H1 (cell line): ENCODE measurements at regions of chr10 and their contacts with region 1.

Region 1: GRCh38 chr10:63268798-63269503 is 135.8 kb downstream of the NRBF2 start:
- DNase-seq: peak; percentile 51 to 68
- H3K4me3 ChIP-seq: peak overlapping the region; percentile 78 to 96 (median 82)
- H3K27ac ChIP-seq: peak overlapping the region; percentile 83
- H3K4me1 ChIP-seq: no peaks in the 10 kb centered on the region; a peak in 1 of 7 replicates
- H3K27me3 ChIP-seq: no peaks in the 10 kb centered on the region
- CTCF ChIP-seq: no peak
- EP300 ChIP-seq: no peak
- POLR2A ChIP-seq: peak; percentile 88 to 97
- RAD21 ChIP-seq: no peak; a peak in 1 of 4 replicates

Region 2: GRCh38 chr10:63256009-63256773 is 12.8 kb before region 1 on chr10:
- CTCF ChIA-PET with region 1: interaction called, 3 read pairs
- POLR2A ChIA-PET with region 1: interaction called, 37 read pairs
- DNase-seq: no peak
- H3K4me3 ChIP-seq: no peak overlapping the region
- H3K27ac ChIP-seq: no peak overlapping the region
- H3K4me1 ChIP-seq: peaks cover 0 to 6% (median under 1%) of the 10 kb centered on the region in 4 experiments; a peak in 2 of 7 replicates
- H3K27me3 ChIP-seq: no peaks in the 10 kb centered on the region
- CTCF ChIP-seq: no peak
- EP300 ChIP-seq: no peak
- POLR2A ChIP-seq: no peak
- RAD21 ChIP-seq: no peak

Region 3: DNA sequence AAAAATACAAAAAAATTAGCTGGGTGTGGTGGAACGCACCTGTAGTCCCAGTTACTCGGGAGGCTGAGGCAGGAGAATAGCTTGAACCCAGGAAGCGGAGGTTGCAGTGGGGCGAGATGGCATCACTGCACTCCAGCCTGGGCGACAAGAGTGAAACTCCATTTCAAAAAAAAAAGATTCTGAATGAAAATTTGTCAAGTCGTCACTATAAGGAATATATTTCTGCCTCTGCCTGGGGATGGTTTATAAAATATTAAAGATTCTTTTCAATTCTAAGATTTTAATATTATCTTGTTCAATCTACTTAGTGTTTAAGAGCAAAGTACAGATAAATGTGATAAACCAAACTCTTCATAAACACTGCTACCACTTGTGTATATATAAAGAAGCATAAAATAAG is 11.4 kb after region 1 on chr10:
- CTCF ChIA-PET with region 1: interaction called, 3 read pairs
- POLR2A ChIA-PET with region 1: interaction called, 36 read pairs
- DNase-seq: no peak
- H3K4me3 ChIP-seq: no peak overlapping the region
- H3K27ac ChIP-seq: no peak overlapping the region
- H3K4me1 ChIP-seq: peaks cover 0 to 7% (median 2%) of the 10 kb centered on the region in 4 experiments; a peak in 3 of 7 replicates
- H3K27me3 ChIP-seq: no peaks in the 10 kb centered on the region
- CTCF ChIP-seq: no peak
- EP300 ChIP-seq: no peak
- POLR2A ChIP-seq: no peak
- RAD21 ChIP-seq: no peak

Region 4: GRCh38 chr10:63331586-63331985 is 62.6 kb after region 1 on chr10:
- CTCF ChIA-PET with region 1: no interaction called
- POLR2A ChIA-PET with region 1: interaction called, 10 read pairs
- DNase-seq: no peak
- H3K4me3 ChIP-seq: no peak overlapping the region
- H3K27ac ChIP-seq: no peak overlapping the region
- H3K4me1 ChIP-seq: no peaks in the 10 kb centered on the region
- H3K27me3 ChIP-seq: no peaks in the 10 kb centered on the region
- CTCF ChIP-seq: no peak
- EP300 ChIP-seq: no peak
- POLR2A ChIP-seq: no peak
- RAD21 ChIP-seq: no peak

Region 5: GRCh38 chr10:63521416-63522276 is 252.7 kb after region 1 on chr10:
- CTCF ChIA-PET with region 1: no interaction called
- POLR2A ChIA-PET with region 1: interaction called, 14 read pairs
- DNase-seq: peak in 1 of 2 experiments; percentile 85
- H3K4me3 ChIP-seq: peak overlapping the region; percentile 73 to 86 (median 82)
- H3K27ac ChIP-seq: peak overlapping the region; percentile 94
- H3K4me1 ChIP-seq: peaks cover 2 to 12% (median 10%) of the 10 kb centered on the region in 4 experiments; a peak in 4 of 7 replicates
- H3K27me3 ChIP-seq: no peaks in the 10 kb centered on the region
- CTCF ChIP-seq: no peak
- EP300 ChIP-seq: no peak
- POLR2A ChIP-seq: peak; percentile 68 to 93
- RAD21 ChIP-seq: peak in 1 of 2 experiments; percentile 0; a peak in 1 of 4 replicates